Activated T-helper 1 cell treated with anti-CD3 and anti-CD28 coated beads, Interleukin-12 subunit alpha, Interleukin-12 subunit beta, Interleukin-2, Interleukin-4 antibody, amounts not matched to agents 30 ng/mL and 10 ng/mL and 1 ng/mL, durations not matched to agents 14 hours and 24 hours and 36 hours (primary cell): ENCODE measurements at regions of chr3 and their contacts with region 1.

Region 1: GRCh38 chr3:50652709-50653108 is 22.0 kb upstream of the DOCK3 start:
- DNase-seq: no peak
- H3K4me3 Mint-ChIP-seq: no peak overlapping the region
- H3K27ac Mint-ChIP-seq: peak overlapping the region; percentile 75
- H3K4me1 Mint-ChIP-seq: peaks cover 23% of the 10 kb centered on the region
- H3K27me3 Mint-ChIP-seq: no peaks in the 10 kb centered on the region

Region 2: GRCh38 chr3:50530001-50530970 is 122.4 kb before region 1 on chr3:
- intact Hi-C with region 1: no loop called
- DNase-seq: no peak
- H3K4me3 Mint-ChIP-seq: no peak overlapping the region
- H3K27ac Mint-ChIP-seq: no peak overlapping the region
- H3K4me1 Mint-ChIP-seq: no peaks in the 10 kb centered on the region
- H3K27me3 Mint-ChIP-seq: peaks cover 45% of the 10 kb centered on the region

Region 3: GRCh38 chr3:50623840-50624474 is 28.8 kb before region 1 on chr3:
- intact Hi-C with region 1: loop called (anchors 1 kb)
- DNase-seq: no peak
- H3K4me3 Mint-ChIP-seq: peak overlapping the region; percentile 65
- H3K27ac Mint-ChIP-seq: peak overlapping the region; percentile 93
- H3K4me1 Mint-ChIP-seq: peaks cover 90% of the 10 kb centered on the region
- H3K27me3 Mint-ChIP-seq: peaks cover 1% of the 10 kb centered on the region

Region 4: GRCh38 chr3:50632450-50632849 is 20.3 kb before region 1 on chr3:
- intact Hi-C with region 1: loop called (anchors 2 kb)
- DNase-seq: no peak
- H3K4me3 Mint-ChIP-seq: peak overlapping the region; percentile 38
- H3K27ac Mint-ChIP-seq: peak overlapping the region; percentile 87
- H3K4me1 Mint-ChIP-seq: peaks cover 93% of the 10 kb centered on the region
- H3K27me3 Mint-ChIP-seq: no peaks in the 10 kb centered on the region